Activated T-helper 1 cell treated with anti-CD3 and anti-CD28 coated beads, Interleukin-12 subunit alpha, Interleukin-12 subunit beta, Interleukin-2, Interleukin-4 antibody, amounts not matched to agents 30 ng/mL and 10 ng/mL and 1 ng/mL, durations not matched to agents 14 hours and 24 hours and 36 hours (primary cell): ENCODE measurements at regions of chr3 and their contacts with region 1.

Region 1: DNA sequence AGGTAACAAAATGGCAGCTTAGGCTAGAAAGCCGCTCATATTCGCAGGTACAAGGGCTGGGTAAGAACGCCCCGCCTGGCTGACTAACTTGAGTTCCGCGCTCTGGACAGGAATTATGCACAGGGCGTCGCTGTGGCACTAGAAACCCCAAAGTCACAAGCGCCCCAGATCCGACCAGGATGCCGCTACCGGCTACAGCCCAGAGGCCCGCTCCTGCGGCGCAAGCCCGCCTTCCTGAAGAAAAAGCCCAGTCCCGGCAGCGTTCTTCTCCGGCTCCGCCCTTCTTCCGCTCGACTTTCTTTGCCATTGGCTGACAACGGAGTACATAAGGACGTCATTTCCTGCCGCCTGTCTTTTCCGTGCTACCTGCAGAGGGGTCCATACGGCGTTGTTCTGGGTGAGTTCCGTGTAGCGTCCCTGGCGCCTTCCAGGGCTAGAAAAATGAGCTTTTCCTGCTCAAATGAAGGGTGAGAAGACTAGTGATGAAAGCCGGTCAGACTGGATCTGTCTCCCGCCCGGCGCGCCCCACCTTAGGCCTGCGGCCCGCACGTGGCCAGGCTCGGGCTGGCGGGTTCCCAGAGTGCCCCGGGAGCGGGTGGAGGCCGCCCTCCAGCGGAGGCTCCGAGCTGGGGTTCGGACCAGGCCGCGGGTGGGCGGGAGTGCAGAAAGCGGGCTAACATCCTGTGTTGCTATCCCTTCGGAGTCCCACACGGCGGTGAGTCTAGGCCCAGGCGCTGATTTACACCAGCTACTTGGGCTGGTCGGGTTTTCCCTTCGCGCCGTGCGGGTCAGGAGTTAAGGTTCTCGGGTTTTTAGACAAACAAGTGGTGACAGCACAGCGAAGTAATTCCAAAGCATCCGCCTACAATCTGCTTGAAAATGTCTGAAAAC is at the start of gene RPSA:
- DNase-seq: peak; percentile 97
- H3K4me3 Mint-ChIP-seq: peak within 1 kb of the TSS; percentile 90
- H3K27ac Mint-ChIP-seq: peak within 1 kb of the TSS; percentile 96
- H3K4me1 Mint-ChIP-seq: peaks cover 53% of the 10 kb centered on the region
- H3K27me3 Mint-ChIP-seq: no peaks in the 10 kb centered on the region
- total RNA-seq, gene RPSA: 1,750 and 1,765 TPM in 2 replicates

Region 2: GRCh38 chr3:38651154-38651789 is 755.3 kb before region 1 on chr3:
- intact Hi-C with region 1: loop called (anchors 10 kb)
- DNase-seq: peak; percentile 55
- H3K4me3 Mint-ChIP-seq: no peak overlapping the region
- H3K27ac Mint-ChIP-seq: no peak overlapping the region
- H3K4me1 Mint-ChIP-seq: peaks cover 12% of the 10 kb centered on the region
- H3K27me3 Mint-ChIP-seq: peaks cover 17% of the 10 kb centered on the region

Region 3: GRCh38 chr3:39107388-39108199 is 299.0 kb before region 1 on chr3 and contains the starts of genes GORASP1 and TTC21A:
- intact Hi-C with region 1: loop called (anchors 1 kb)
- DNase-seq: peak; percentile 65
- H3K4me3 Mint-ChIP-seq: peak within 1 kb of the TSS; percentile 93
- H3K27ac Mint-ChIP-seq: peak within 1 kb of the TSS; percentile 69
- H3K4me1 Mint-ChIP-seq: peaks cover 53% of the 10 kb centered on the region
- H3K27me3 Mint-ChIP-seq: peaks cover 7% of the 10 kb centered on the region
- total RNA-seq, gene GORASP1: 26.6 and 35.6 TPM in 2 replicates
- total RNA-seq, gene TTC21A: 0.83 and 1.0 TPM in 2 replicates

Region 4: GRCh38 chr3:39343076-39343717 is 63.4 kb before region 1 on chr3:
- intact Hi-C with region 1: no loop called
- DNase-seq: no peak
- H3K4me3 Mint-ChIP-seq: no peak overlapping the region
- H3K27ac Mint-ChIP-seq: no peak overlapping the region
- H3K4me1 Mint-ChIP-seq: peaks cover 38% of the 10 kb centered on the region
- H3K27me3 Mint-ChIP-seq: peaks cover 2% of the 10 kb centered on the region

Region 5: DNA sequence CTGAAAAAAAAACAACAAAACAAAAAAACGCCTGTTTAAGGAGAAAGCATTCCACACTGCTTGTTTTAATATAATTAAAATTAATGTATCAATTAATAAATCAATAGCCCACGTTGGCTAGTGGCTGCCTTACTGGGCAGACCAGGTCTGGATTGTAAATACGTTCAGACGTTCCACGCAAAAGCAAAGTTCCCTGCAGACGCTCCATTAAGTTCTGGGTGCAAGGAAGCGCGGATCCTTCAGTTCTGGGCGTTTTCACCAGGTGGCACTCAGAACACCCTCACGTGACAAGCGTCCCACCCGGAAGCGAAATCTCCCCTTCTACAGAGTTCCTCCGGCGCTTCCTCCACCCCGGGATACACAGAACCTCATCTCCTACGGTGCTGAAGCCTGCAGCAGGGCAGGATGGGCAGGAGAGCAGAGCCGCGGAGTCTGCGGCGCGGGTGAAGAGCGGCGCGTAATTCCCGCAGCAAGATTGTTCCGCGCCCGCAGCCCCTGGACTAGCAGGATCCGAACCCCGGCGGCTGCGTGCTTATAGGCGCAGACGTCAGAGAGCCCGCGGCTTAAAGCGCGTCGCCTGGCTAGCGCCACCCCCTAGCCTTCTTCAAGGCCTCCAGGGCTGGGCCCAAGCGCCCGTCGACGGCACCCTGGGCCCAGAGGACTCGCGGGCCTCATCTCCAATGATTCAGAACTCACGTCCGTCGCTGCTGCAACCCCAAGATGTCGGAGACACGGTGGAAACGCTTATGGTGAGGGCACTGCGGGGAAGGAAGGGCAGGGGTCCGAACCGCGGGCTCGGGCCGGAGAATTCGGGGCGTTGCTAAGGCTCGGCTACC is 23.4 kb before region 1 on chr3 and contains the start of gene SLC25A38:
- intact Hi-C with region 1: loop called (anchors 1 kb)
- DNase-seq: peak; percentile 74
- H3K4me3 Mint-ChIP-seq: peak within 1 kb of the TSS; percentile 94
- H3K27ac Mint-ChIP-seq: peak within 1 kb of the TSS; percentile 97
- H3K4me1 Mint-ChIP-seq: peaks cover 34% of the 10 kb centered on the region
- H3K27me3 Mint-ChIP-seq: no peaks in the 10 kb centered on the region
- total RNA-seq, gene SLC25A38: 40.0 and 43.1 TPM in 2 replicates

Region 6: GRCh38 chr3:40309418-40309924 is 902.9 kb after region 1 on chr3 and contains the start of gene EIF1B:
- intact Hi-C with region 1: loop called (anchors 1 kb)
- DNase-seq: peak; percentile 98
- H3K4me3 Mint-ChIP-seq: peak within 1 kb of the TSS; percentile 96
- H3K27ac Mint-ChIP-seq: peak within 1 kb of the TSS; percentile 95
- H3K4me1 Mint-ChIP-seq: peaks cover 28% of the 10 kb centered on the region
- H3K27me3 Mint-ChIP-seq: no peaks in the 10 kb centered on the region
- total RNA-seq, gene EIF1B: 49.1 and 49.6 TPM in 2 replicates